Pancreas (tissue), 10 donors: ENCODE measurements at regions of chr7 and their contacts with region 1.

Region 1: DNA sequence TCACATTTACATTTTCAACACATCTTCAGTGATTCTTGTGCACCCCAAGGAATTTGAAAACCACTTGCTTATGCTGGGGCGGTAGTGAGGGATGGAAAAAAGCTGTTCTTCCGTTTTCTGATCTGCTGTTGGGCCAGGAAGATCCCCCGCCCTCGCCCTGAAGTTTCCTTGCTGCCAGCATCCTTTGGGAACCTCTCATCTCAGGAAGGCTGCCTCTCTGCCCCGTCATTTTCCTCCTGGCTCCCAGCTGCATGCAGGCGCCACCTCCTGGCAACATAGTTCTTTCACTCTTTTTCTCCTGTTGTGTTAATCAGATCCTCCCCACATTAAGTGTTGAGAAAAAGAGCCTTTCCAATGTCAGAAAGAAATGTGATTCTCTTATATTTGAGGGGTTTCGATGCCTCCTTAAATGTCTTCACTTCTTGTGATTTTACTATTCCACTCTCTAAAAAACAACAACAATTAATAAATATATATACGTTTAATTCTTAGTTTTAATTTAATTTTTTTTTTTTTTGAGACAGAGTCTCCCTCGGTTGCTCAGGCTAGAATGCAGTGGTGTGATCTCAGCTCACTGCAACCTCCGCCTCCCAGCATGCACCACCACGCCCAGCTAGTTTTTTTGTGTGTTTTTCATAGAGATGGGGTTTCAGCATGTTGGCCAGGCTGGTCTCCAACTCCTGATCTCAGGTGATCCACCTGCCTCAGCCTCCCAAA is 122.9 kb downstream of the RALA start:
- DNase-seq: peak; percentile 45 to 75 (median 68)
- ATAC-seq: peak; percentile 61 to 95 (median 92)
- H3K4me3 ChIP-seq: no peak overlapping the region
- H3K27ac ChIP-seq: no peak overlapping the region
- H3K4me1 ChIP-seq: no peaks in the 10 kb centered on the region
- H3K27me3 ChIP-seq: no peaks in the 10 kb centered on the region
- CTCF ChIP-seq: peak; percentile 24 to 54 (median 43)

Region 2: GRCh38 chr7:39458061-39458745 is 288.1 kb before region 1 on chr7:
- intact Hi-C with region 1: no loop called
- DNase-seq: no peak
- ATAC-seq: peak; percentile 50 to 70 (median 56)
- H3K4me3 ChIP-seq: peak overlapping the region in 1 of 4 donors; percentile 25
- H3K27ac ChIP-seq: no peak overlapping the region
- H3K4me1 ChIP-seq: no peaks in the 10 kb centered on the region
- H3K27me3 ChIP-seq: no peaks in the 10 kb centered on the region
- CTCF ChIP-seq: no peak

Region 3: DNA sequence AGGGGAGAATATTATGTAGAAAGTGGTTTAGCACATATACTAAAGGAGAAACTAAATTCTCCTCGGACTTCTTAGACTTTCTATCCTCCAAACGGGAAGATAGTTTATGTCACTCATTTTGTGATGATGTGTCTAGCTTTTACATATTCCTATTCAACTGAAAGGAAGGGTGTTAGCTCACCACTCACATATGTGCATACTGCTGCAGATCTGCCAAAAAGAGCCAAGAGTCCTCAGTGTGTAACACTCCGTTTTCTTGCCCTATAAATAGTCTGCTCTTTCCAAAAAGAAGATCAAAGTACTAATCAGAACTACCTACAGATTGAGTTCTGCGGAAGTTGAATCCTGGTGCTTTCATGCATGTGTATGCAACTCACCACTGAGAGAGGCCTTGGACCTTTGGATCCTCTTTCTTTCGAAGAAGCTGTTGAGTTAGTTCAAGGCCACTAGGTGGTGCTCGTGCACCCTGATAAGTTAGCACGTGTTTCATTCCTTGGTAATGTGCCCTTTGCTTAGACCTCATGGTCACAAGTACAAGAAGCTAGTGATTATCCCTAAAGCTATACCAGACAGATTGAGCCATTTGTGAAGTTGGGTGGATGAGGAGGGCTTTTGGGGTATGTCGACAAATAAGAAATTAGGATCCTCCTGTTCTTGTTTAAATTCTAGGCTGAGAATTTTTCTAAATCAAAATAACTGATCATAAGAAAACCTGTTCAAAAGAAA is 165.9 kb before region 1 on chr7:
- intact Hi-C with region 1: loop called in 2 of 3 experiments (anchors 5 kb)
- DNase-seq: peak; percentile 48 to 85 (median 72)
- ATAC-seq: peak; percentile 98 to 100 (median 100)
- H3K4me3 ChIP-seq: no peak overlapping the region
- H3K27ac ChIP-seq: no peak overlapping the region
- H3K4me1 ChIP-seq: no peaks in the 10 kb centered on the region
- H3K27me3 ChIP-seq: no peaks in the 10 kb centered on the region
- CTCF ChIP-seq: peak; percentile 68 to 88 (median 85)

Region 4: DNA sequence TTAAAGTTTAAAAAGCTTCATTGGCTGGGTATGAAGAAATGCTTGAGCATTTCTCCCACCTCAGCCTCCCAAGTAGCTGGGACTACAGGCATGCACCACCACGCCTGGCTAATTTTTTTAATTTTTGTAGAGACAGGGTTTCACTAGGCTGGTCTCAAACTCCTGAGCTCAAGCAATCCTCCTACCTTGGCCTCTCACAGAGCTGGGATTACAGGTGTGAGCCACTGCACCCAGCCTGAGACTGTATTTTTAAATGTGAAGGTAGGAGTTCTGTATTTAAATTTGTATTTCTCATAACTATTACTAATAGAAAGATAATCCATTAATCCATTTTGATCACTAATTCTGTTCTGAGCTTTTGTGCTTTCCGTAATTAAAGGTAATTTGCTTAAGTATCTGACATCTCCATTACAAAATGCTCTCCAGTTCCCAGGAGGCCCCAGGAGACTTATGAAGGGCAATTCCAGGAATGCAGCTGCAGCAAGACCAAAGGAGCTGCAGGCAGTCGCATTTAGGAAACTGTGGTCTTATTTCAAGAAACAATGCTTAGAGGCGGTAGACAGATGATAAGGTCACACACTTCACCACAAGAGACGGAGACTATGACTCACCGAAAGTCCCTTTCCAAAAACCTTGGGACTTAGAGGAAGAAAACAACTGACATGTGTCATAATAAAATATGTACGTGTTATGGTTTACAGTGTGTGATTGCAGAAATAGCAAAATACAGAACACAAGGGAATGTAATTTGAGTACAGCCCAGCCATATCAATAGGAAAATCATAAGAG is 156.7 kb before region 1 on chr7:
- intact Hi-C with region 1: loop called in 2 of 3 experiments (anchors 5 to 10 kb)
- DNase-seq: peak in 1 of 6 donors; percentile 26
- ATAC-seq: peak in 2 of 4 donors; percentile 77 to 81
- H3K4me3 ChIP-seq: no peak overlapping the region
- H3K27ac ChIP-seq: peak overlapping the region in 1 of 4 donors; percentile 17
- H3K4me1 ChIP-seq: no peaks in the 10 kb centered on the region
- H3K27me3 ChIP-seq: no peaks in the 10 kb centered on the region
- CTCF ChIP-seq: no peak

Region 5: DNA sequence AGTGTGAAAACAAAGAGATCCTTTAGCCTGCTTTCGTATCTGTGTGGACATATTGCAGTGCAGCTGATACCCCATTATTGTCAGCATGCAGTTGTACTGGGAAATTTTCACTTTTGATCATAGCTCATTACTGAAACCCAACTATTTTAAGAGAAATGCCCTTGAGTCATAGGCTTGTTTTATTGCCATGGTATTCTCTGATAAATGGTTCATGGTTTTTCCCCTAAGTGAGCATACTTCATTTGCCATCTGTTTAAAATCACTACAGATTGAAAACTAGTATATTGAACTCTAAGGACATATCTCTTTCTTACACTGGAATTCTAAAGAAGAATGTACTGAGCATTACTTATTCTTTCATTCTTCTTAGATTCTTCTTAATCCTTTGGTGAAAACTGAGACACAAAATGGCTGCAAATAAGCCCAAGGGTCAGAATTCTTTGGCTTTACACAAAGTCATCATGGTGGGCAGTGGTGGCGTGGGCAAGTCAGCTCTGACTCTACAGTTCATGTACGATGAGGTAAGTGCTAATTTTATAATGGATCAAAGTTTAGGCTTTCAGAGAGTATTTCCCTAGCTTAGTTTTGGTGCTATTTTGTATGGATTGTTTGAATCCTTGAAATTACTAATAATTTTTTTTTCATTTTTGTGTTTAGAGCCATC is 59.9 kb before region 1 on chr7:
- intact Hi-C with region 1: no loop called
- DNase-seq: no peak
- ATAC-seq: no peak
- H3K4me3 ChIP-seq: no peak overlapping the region
- H3K27ac ChIP-seq: no peak overlapping the region
- H3K4me1 ChIP-seq: peaks cover 0 to 4% (median 0%) of the 10 kb centered on the region in 3 donors
- H3K27me3 ChIP-seq: no peaks in the 10 kb centered on the region
- CTCF ChIP-seq: no peak

Region 6: DNA sequence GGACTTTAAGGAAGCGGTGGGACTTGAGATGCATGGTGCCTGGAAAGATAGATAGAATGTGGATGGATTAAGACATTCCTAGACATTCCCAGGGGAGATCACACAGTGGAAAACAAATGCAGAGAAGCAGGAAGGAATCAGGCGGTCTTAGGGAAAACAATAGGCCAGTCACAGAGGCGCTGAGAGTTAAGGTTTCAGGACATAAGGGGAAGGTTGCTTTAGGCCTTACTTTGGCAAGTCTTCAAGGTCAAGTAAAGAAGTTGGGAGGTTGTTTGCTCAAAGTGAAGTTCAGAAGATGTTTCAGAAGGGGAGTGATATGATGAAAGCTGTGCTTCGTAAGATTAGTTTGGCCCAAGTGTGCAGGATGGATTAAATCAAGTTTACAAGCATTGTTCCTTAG is 498.0 kb after region 1 on chr7:
- intact Hi-C with region 1: no loop called
- DNase-seq: no peak
- ATAC-seq: no peak
- H3K4me3 ChIP-seq: no peak overlapping the region
- H3K27ac ChIP-seq: no peak overlapping the region
- H3K4me1 ChIP-seq: no peaks in the 10 kb centered on the region
- H3K27me3 ChIP-seq: no peaks in the 10 kb centered on the region
- CTCF ChIP-seq: no peak